Head of caudate nucleus (tissue), 42 donors: ENCODE measurements at regions of chr6 and their contacts with region 1.

Region 1: GRCh38 chr6:158231551-158232315 is 63.6 kb downstream of the GTF2H5 start:
- DNase-seq: peak; percentile 38 to 91 (median 81)

Region 2: GRCh38 chr6:158284007-158284875 is 52.5 kb after region 1 on chr6:
- intact Hi-C with region 1: loop called (anchors 10 kb)
- DNase-seq: peak in 21 of 42 donors; percentile 23 to 71 (median 39)

Region 3: GRCh38 chr6:158408552-158409130 is 176.9 kb after region 1 on chr6:
- intact Hi-C with region 1: loop called (anchors 10 kb)
- DNase-seq: peak; percentile 36 to 87 (median 72)